Naive thymus-derived CD4-positive, alpha-beta T cell (primary cell): ENCODE measurements at regions of chr11 and their contacts with region 1.

Region 1: DNA sequence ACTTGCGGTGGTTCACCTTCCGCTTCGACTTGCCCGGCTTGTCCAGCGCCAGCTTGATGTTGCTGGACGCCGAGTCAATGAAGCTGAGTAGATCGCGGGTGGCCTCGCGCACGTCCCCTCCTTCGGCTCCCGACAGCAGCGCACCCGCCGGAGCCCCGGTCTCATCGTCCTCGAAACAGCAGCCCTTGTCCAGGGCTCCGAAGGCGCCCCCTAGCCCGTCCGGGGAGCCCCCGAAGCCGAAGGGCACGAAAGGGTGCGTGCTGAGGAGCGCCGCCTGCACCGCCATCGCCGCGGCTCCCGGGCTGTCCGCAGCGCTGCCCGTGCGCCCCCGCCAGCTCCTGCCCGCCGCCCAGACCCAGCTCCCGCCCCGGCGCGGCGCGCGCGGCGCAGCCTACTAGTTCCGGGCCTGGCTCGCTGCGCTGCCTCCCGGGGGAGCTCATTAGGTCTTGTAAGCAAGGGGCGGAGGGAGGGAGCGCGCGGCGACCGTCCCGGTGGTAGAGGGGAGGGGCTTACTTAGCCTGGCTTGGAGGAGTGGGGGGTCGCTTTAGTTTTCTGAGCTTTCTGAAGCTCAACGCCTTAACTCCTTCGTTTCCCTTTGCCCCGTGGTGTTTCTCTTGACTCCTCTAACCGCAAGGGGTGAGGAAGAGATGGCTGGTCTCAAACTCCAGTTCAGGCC is at the start of gene FAM181B:
- DNase-seq: peak; percentile 32 to 54 (median 44)
- ATAC-seq: peak; percentile 80
- H3K4me3 ChIP-seq: peak within 1 kb of the TSS; percentile 51
- H3K4me3 Mint-ChIP-seq: peak within 1 kb of the TSS; percentile 72 to 84 (median 78)
- H3K27ac ChIP-seq: no peak within 1 kb of the TSS
- H3K27ac Mint-ChIP-seq: peak within 1 kb of the TSS in 2 of 9 donors; percentile 5 to 15
- H3K4me1 ChIP-seq: no peaks in the 10 kb centered on the region
- H3K4me1 Mint-ChIP-seq: peaks cover 8 to 31% (median 24%) of the 10 kb centered on the region in 7 donors
- H3K27me3 ChIP-seq: peaks cover 4 to 8% of the 10 kb centered on the region in 2 donors
- H3K27me3 Mint-ChIP-seq: peaks cover 32 to 80% (median 51%) of the 10 kb centered on the region in 5 donors
- total RNA-seq, gene FAM181B: 0.10 to 0.97 (median 0.40) TPM in 4 of 5 experiments, not detected in the other

Region 2: GRCh38 chr11:82653752-82654151 is 79.8 kb before region 1 on chr11:
- CTCF ChIA-PET with region 1: no interaction called
- POLR2A ChIA-PET with region 1: no interaction called
- intact Hi-C with region 1: no loop called
- DNase-seq: no peak
- ATAC-seq: no peak
- H3K4me3 ChIP-seq: no peak overlapping the region
- H3K4me3 Mint-ChIP-seq: no peak overlapping the region
- H3K27ac ChIP-seq: no peak overlapping the region
- H3K27ac Mint-ChIP-seq: no peak overlapping the region
- H3K4me1 ChIP-seq: no peaks in the 10 kb centered on the region
- H3K4me1 Mint-ChIP-seq: no peaks in the 10 kb centered on the region
- H3K27me3 ChIP-seq: no peaks in the 10 kb centered on the region
- H3K27me3 Mint-ChIP-seq: peaks cover 3 to 45% (median 32%) of the 10 kb centered on the region in 5 donors

Region 3: GRCh38 chr11:82750643-82751139 is 17.1 kb after region 1 on chr11:
- CTCF ChIA-PET with region 1: interaction called, 5 read pairs
- POLR2A ChIA-PET with region 1: interaction called, 5 read pairs
- intact Hi-C with region 1: loop called in 1 of 2 experiments (anchors 1 kb)
- DNase-seq: peak in 7 of 9 donors; percentile 41 to 66 (median 62)
- ATAC-seq: peak; percentile 84
- H3K4me3 ChIP-seq: peak overlapping the region; percentile 21
- H3K4me3 Mint-ChIP-seq: peak overlapping the region; percentile 71 to 87 (median 82)
- H3K27ac ChIP-seq: peak overlapping the region; percentile 11
- H3K27ac Mint-ChIP-seq: peak overlapping the region; percentile 22 to 91 (median 60)
- H3K4me1 ChIP-seq: peaks cover 2 to 27% of the 10 kb centered on the region in 2 donors
- H3K4me1 Mint-ChIP-seq: peaks cover 15 to 47% (median 38%) of the 10 kb centered on the region in 7 donors
- H3K27me3 ChIP-seq: no peaks in the 10 kb centered on the region
- H3K27me3 Mint-ChIP-seq: peaks cover 0 to 38% (median 0%) of the 10 kb centered on the region in 5 donors

Region 4: GRCh38 chr11:82756765-82757639 is 23.4 kb after region 1 on chr11:
- CTCF ChIA-PET with region 1: no interaction called
- POLR2A ChIA-PET with region 1: interaction called, 7 read pairs
- intact Hi-C with region 1: loop called in 1 of 2 experiments (anchors 1 kb)
- DNase-seq: peak in 5 of 9 donors; percentile 16 to 32 (median 28)
- ATAC-seq: peak; percentile 52
- H3K4me3 ChIP-seq: peak overlapping the region; percentile 28
- H3K4me3 Mint-ChIP-seq: peak overlapping the region; percentile 35 to 89 (median 80)
- H3K27ac ChIP-seq: peak overlapping the region; percentile 62
- H3K27ac Mint-ChIP-seq: peak overlapping the region in 8 of 9 donors; percentile 81 to 92 (median 88)
- H3K4me1 ChIP-seq: peaks cover 0 to 26% of the 10 kb centered on the region in 2 donors
- H3K4me1 Mint-ChIP-seq: peaks cover 18 to 52% (median 43%) of the 10 kb centered on the region in 7 donors
- H3K27me3 ChIP-seq: no peaks in the 10 kb centered on the region
- H3K27me3 Mint-ChIP-seq: peaks cover 0 to 34% (median 0%) of the 10 kb centered on the region in 5 donors

Region 5: GRCh38 chr11:82765466-82766034 is 32.0 kb after region 1 on chr11:
- CTCF ChIA-PET with region 1: interaction called, 3 read pairs
- POLR2A ChIA-PET with region 1: interaction called, 3 read pairs
- intact Hi-C with region 1: loop called in 1 of 2 experiments (anchors 2 kb)
- DNase-seq: peak in 6 of 9 donors; percentile 14 to 46 (median 22)
- ATAC-seq: peak; percentile 47
- H3K4me3 ChIP-seq: no peak overlapping the region
- H3K4me3 Mint-ChIP-seq: peak overlapping the region in 7 of 10 donors; percentile 20 to 72 (median 51)
- H3K27ac ChIP-seq: no peak overlapping the region
- H3K27ac Mint-ChIP-seq: peak overlapping the region in 5 of 9 donors; percentile 14 to 79 (median 72)
- H3K4me1 ChIP-seq: peaks cover 0 to 4% of the 10 kb centered on the region in 2 donors
- H3K4me1 Mint-ChIP-seq: peaks cover 0 to 28% (median 19%) of the 10 kb centered on the region in 7 donors
- H3K27me3 ChIP-seq: no peaks in the 10 kb centered on the region
- H3K27me3 Mint-ChIP-seq: peaks cover 0 to 15% (median 0%) of the 10 kb centered on the region in 5 donors

Region 6: DNA sequence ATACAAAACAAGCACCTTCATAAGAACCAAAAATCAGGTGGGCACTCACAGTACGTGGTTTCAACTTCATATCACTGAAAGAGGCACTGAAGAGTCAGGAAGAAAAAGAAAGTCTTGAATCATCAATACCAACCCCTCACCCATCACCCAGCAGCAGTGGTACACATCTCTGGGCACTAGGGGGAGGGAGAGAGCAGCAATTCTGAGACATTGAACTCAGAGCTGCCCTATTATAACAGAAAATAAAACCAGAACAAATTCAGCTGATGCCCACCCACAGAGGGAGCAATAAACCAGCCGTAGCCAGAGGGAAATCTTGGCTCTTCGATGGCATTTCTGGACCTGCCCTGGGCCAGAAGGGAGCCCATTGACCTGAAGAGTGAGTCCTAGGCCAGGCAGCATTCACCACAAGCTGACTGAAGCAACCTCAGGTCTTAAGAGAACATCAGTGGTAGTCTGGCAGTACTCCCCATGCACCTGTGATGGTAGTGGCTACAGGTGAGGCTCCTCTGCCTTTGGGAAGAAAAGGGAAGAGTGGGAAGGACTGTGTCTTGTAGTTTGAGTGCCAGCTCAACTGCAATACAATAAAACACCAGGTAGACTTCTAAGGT is 42.3 kb after region 1 on chr11:
- CTCF ChIA-PET with region 1: interaction called, 4 read pairs
- POLR2A ChIA-PET with region 1: interaction called, 11 read pairs
- intact Hi-C with region 1: loop called in 1 of 2 experiments (anchors 2 kb)
- DNase-seq: peak in 7 of 9 donors; percentile 6 to 34 (median 16)
- ATAC-seq: peak; percentile 82
- H3K4me3 ChIP-seq: no peak overlapping the region
- H3K4me3 Mint-ChIP-seq: no peak overlapping the region
- H3K27ac ChIP-seq: no peak overlapping the region
- H3K27ac Mint-ChIP-seq: no peak overlapping the region
- H3K4me1 ChIP-seq: no peaks in the 10 kb centered on the region
- H3K4me1 Mint-ChIP-seq: peaks cover 0 to 2% (median 0%) of the 10 kb centered on the region in 7 donors
- H3K27me3 ChIP-seq: no peaks in the 10 kb centered on the region
- H3K27me3 Mint-ChIP-seq: peaks cover 0 to 33% (median 0%) of the 10 kb centered on the region in 5 donors

Region 7: DNA sequence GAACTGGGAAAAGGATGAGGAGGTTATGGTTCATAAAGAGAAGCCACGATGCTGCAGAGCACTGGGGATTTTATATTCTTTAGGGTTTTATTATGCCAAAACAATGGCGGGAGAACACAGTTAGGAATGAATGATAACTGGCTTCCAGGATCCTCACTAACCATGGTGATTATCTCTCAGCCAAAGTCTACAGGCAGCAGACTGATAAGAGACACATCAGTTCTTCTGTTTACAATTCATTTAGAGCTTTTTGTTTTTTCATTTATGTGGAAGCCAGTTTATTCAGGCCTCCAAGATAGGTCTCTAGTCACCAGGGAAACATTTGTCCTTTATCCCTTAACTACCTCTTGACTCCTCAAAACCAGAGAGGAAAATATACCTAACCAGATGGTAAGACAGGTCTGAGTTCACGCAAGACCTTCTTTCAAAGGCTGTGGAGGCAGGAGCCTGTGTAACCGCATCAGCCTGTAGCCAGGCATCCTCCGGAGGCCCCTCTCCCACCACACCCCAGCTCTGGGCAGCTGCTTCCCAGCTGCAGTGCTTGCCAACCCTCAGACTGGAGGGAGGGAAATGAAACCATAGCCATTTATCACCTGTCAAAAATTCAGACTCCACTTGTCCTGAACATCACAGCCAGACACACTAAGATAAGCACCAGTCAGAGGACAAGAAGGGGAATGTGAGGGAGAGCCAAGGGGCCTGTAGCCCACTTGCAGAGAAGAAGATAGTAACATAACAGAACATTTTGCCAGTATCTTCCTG is 57.3 kb after region 1 on chr11:
- CTCF ChIA-PET with region 1: no interaction called
- POLR2A ChIA-PET with region 1: no interaction called
- intact Hi-C with region 1: no loop called
- DNase-seq: no peak
- ATAC-seq: peak; percentile 27
- H3K4me3 ChIP-seq: no peak overlapping the region
- H3K4me3 Mint-ChIP-seq: no peak overlapping the region
- H3K27ac ChIP-seq: no peak overlapping the region
- H3K27ac Mint-ChIP-seq: no peak overlapping the region
- H3K4me1 ChIP-seq: no peaks in the 10 kb centered on the region
- H3K4me1 Mint-ChIP-seq: peaks cover 0 to 6% (median 0%) of the 10 kb centered on the region in 7 donors
- H3K27me3 ChIP-seq: no peaks in the 10 kb centered on the region
- H3K27me3 Mint-ChIP-seq: peaks cover 0 to 2% (median 0%) of the 10 kb centered on the region in 5 donors

Region 8: DNA sequence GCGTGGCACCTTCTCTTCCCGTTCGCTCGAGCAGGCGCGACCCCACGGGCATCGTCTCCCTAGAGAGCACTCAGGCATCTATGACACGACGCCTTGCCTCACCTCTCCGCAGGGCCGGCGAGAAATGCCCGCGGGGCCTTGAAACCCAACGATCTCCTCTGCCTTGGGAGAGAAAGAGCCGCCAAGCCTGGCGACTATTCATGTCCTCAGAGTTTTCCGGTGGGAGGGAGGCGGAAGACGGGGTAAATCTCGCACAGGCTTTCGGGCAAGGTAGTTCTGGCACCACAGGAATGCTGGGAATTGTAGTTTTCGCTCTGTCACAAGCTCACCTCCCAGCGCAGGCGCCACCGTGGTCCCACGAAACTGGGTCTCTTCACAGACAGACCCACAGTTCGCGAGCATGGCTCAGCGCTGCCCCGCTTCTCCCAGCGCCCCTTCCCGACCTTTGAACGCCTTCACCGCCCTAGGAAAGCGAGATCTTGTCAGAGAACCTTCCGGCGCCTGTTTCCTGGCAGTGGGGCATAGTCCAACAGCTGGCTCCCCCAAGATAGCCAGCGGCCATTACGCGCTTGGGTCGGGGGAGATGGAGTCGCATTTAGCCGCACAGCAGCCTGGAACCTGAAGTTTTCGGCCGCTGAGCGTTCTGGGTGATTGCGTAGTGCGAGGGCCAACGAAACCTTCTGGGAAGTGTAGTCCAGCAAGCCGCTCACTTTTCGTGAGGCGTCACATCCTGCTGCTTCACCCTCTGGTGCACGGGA is 552.4 kb after region 1 on chr11 and contains the start of gene CCDC90B:
- CTCF ChIA-PET with region 1: no interaction called
- POLR2A ChIA-PET with region 1: interaction called, 3 read pairs
- intact Hi-C with region 1: loop called in 1 of 2 experiments (anchors 2 kb)
- DNase-seq: peak; percentile 83 to 97 (median 96)
- ATAC-seq: peak; percentile 93
- H3K4me3 ChIP-seq: peak within 1 kb of the TSS; percentile 93
- H3K4me3 Mint-ChIP-seq: peak within 1 kb of the TSS; percentile 92 to 100 (median 98)
- H3K27ac ChIP-seq: peak within 1 kb of the TSS; percentile 95
- H3K27ac Mint-ChIP-seq: peak within 1 kb of the TSS; percentile 98 to 100 (median 99)
- H3K4me1 ChIP-seq: peaks cover 14 to 23% of the 10 kb centered on the region in 2 donors
- H3K4me1 Mint-ChIP-seq: peaks cover 19 to 52% (median 36%) of the 10 kb centered on the region in 7 donors
- H3K27me3 ChIP-seq: no peaks in the 10 kb centered on the region
- H3K27me3 Mint-ChIP-seq: peaks cover 0 to 11% (median 0%) of the 10 kb centered on the region in 5 donors
- total RNA-seq, gene CCDC90B: 19.1 to 40.8 (median 27.8) TPM